ENCODE measurements at regions of chr6 and their contacts with region 1.

Region 1: DNA sequence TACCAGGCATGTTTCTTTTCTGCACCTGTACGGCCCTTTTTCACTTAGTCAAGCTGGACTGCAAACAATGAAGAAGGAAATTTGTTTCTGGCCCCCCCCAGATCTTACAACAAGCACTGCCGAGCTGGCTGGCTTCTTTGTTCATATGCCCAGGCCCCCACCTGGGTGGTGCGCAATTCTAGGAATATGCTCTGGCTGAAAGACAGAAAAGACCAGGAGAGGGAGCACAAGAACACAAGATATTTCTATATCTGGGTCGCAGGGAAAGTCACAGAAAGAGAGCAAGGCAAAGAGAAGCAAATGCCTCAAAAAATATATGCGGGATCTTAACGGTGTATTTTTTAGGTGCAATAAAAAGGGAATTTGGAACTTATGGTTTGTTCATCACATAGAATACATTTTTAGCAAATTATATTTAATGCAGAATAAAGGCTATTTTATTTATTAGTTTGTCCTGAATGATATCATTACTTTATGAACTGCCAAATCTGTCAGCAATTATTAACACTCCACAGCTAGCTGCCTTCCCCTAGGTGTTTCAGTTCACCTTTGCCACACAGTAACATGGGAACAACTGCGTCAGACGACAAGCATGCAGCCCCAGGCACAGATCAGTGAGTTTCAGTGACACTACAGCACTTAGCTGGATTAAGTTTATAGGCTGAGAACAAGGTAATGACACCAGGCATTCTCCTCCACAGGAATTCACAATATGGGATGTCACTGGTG is 76.5 kb downstream of the GJA10 start:
- DNase-seq: no peak
- ATAC-seq: peak; percentile 79
- H3K4me3 ChIP-seq: no peak overlapping the region
- H3K27ac ChIP-seq: no peak overlapping the region
- H3K4me1 ChIP-seq: peaks cover 6% of the 10 kb centered on the region
- H3K27me3 ChIP-seq: no peaks in the 10 kb centered on the region
- CTCF ChIP-seq: peak; percentile 58

Region 2: GRCh38 chr6:90098001-90098531 is 127.3 kb after region 1 on chr6:
- intact Hi-C with region 1: loop called (anchors 10 kb)
- DNase-seq: no peak
- ATAC-seq: peak; percentile 79
- H3K4me3 ChIP-seq: no peak overlapping the region
- H3K27ac ChIP-seq: peak overlapping the region; percentile 61
- H3K4me1 ChIP-seq: peaks cover 8% of the 10 kb centered on the region
- H3K27me3 ChIP-seq: no peaks in the 10 kb centered on the region
- CTCF ChIP-seq: peak; percentile 46